Posterior cingulate gyrus (tissue), 11 donors: ENCODE measurements at regions of chr13 and their contacts with region 1.

Region 1: GRCh38 chr13:91375116-91375729 is 23.2 kb upstream of the GPC5 start:
- DNase-seq: no peak

Region 2: DNA sequence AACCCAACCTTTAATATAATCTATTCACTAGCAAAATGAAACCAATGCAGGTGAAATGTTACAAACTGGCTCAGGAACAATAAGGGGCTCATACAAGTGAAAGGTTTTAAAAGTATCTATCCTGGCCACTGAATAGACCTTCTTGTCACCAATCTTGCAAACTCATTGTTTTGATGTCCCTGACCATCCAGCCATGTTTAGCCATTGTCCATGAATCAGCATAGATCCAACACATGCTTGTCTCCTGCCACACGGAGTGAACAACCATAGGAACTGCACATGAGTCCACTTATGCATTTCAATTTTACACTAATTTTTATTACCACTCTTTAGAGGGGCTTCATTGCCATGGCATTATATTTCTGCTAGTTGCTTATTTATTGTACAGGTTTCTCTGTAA is 354.6 kb after region 1 on chr13:
- intact Hi-C with region 1: no loop called
- DNase-seq: no peak

Region 3: DNA sequence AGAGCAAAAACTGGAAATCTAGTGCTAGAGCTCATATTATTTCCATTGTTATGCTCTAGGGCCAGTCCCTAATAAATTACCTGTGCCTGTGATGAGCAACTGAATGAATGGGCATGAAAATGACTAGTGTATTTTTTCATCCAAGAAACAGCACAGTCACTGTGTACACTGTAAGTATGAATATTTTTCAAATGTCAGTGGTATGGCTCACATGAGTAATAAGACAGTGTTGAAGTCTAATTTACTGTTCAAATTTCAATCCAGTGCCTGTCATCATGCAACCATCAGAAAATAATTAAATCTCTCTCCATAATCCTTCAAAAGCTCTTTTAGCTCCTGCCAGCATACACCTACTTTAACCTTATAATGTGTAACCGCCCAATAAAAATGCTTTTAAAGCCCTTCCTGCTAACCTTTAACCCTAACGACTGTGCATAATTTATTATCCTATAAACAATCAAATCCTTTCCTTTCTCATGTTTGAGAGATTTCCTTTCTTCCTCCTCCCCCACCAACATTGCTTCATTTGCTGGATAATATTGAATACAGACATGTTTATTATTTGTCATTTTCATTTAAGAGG is 401.5 kb after region 1 on chr13:
- intact Hi-C with region 1: loop called (anchors 5 kb)
- DNase-seq: no peak